ENCODE measurements at regions of chr11 and their contacts with region 1.

Region 1: DNA sequence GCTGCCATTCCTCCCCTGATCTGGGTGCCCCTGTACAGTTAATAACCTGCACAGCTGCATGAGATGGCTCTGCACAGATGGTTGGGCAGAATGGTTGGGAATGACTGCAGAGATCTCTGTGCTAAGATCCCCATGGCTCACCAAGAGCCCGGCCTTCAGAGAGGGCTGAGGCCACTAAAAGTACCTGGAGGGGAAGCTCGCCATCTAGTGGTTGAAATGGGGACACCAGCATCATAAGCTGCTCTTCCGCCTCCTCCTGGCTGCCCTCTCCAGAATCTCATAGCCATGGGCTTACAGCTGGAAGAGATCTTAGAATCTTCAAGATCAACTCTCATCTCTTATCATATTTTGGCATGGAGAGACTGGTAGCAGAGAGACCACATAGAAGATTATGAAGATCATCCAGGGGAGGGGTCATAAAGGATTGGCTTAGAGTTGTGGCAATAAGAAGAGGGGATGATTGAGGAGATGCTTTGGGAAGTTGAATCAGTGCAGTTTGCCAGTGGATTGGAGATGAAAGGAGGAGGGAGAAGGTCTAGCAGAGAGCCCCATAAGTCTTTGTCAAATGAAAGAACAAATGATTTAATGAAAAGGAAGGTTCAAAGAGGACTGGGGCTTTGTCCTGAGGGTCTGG is 22.0 kb upstream of the TLCD5 start:
- DNase-seq: peak; percentile 56 to 76
- ATAC-seq: peak; percentile 79 to 89
- H3K4me3 ChIP-seq: no peak overlapping the region
- H3K27ac ChIP-seq: no peak overlapping the region
- H3K4me1 ChIP-seq: peaks cover 22% of the 10 kb centered on the region
- CTCF ChIP-seq: peak; percentile 70
- EP300 ChIP-seq: no peak
- POLR2A ChIP-seq: no peak
- RAD21 ChIP-seq: peak; percentile 55 to 64; a peak in 4 of 5 replicates

Region 2: DNA sequence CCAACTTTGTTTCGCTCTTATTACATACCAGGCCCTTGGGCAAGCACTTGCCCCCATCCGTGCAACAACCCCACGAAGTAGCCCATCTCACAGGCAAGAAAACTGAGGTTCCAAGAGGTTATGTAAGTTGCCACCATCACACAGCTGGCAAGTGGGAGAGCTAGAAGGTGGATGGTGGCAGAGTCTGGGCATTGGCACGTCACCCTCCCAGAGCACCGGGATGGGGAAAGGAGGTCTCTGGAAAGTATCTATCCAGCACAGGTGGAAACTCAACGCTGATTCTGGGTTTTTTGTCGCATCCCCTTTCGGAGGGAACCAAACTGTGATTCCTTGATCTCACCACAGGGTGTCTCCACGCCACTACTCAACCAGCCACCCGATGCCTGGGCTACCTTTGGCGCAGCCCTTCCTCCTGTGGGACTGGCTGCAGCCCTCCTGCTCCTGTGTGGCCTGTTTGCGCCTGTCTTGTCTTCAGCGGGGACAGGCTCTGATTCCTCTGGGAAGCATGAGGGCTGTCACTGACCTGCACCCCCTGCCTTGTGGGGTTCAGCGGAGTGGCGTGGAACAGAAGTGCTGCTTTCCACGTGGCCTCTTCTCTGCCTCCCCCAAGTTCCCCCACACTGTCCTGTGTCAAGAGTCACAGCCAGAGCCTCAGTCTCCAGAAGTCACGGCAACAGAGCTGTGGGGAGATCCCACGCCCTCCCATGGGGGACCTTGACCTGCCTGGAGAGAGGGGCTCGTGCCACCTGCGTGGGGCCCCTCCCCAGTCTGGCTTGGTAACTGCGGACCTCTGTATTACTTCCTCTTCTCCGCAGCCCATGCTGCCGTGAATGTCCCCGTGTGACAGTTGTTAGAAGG is 130.8 kb before region 1 on chr11:
- CTCF ChIA-PET with region 1: interaction called, 109 read pairs
- POLR2A ChIA-PET with region 1: no interaction called
- DNase-seq: peak; percentile 50 to 64
- ATAC-seq: peak; percentile 55 to 73
- H3K4me3 ChIP-seq: no peak overlapping the region
- H3K27ac ChIP-seq: no peak overlapping the region
- H3K4me1 ChIP-seq: 0 out of 3 replicates have a peak, but pooled peaks cover 3% of the 10 kb centered on the region
- CTCF ChIP-seq: peak; percentile 56
- EP300 ChIP-seq: no peak
- POLR2A ChIP-seq: no peak
- RAD21 ChIP-seq: peak; percentile 79 to 87

Region 3: DNA sequence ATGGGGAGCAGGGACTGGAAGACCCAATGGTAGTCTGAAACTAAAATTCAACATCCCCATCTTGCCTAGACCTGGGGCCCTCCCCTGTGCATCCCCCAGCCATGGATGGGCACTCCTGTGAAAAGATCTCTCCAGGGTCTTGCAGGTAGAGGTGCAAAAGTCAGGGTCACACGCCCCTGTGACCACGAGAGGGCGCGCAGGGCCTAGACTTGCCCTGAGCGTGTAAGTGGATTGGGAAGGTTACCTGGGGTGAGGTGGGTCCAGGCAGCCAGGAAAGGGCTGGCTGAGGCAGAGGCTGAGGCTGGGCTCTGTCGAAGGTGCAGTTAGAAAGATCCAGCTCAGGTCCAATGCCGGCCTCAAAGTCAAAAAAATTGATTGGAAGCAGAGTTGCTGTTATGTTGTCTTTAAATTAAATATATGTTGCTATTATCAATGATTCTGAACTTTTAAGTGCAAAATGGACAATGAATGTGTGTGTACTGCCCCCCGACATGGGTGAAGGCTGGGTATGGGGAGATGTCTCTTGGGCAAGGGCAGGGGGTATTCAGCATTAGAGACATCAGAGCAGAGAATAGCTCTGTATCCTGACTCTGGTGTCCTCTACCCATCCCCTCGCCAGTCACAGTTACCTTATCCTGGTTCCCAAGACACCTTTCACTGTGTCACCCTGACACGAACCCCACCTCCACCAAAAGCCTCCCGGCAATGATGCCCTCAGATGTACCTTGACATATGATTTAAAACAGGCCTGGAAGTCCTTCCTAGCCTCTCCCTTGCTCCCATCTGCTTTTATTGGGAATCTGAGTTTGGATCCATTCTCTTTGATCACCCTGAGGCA is 67.9 kb before region 1 on chr11:
- CTCF ChIA-PET with region 1: interaction called, 407 read pairs
- POLR2A ChIA-PET with region 1: interaction called, 4 read pairs
- DNase-seq: peak; percentile 64 to 68
- ATAC-seq: peak; percentile 82 to 91; a peak in 5 of 6 replicates
- H3K4me3 ChIP-seq: no peak overlapping the region
- H3K27ac ChIP-seq: no peak overlapping the region
- H3K4me1 ChIP-seq: no peaks in the 10 kb centered on the region
- CTCF ChIP-seq: peak; percentile 66
- EP300 ChIP-seq: no peak
- POLR2A ChIP-seq: no peak
- RAD21 ChIP-seq: peak; percentile 73 to 79

Region 4: DNA sequence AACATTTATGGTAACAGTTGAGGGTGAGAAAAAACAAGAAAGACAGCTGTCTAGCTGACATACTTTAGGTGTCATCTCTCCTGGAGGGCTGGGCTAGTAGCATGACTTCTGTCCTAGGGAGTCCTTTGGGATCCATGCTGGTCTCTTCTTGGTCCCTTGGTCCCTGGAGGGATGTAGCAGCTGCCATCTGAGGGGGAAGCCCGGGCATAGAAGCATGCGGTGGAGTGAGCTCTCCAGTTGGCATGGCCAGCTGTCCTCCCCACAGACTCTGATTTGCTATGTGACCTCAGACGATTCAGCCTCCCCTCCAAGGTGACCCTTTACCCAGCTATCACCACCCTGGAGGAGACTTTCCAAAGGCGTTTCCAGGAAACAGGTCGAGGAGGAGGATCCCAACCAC is 34.4 kb before region 1 on chr11:
- CTCF ChIA-PET with region 1: interaction called, 11 read pairs
- POLR2A ChIA-PET with region 1: no interaction called
- DNase-seq: no peak
- ATAC-seq: no peak
- H3K4me3 ChIP-seq: no peak overlapping the region
- H3K27ac ChIP-seq: no peak overlapping the region
- H3K4me1 ChIP-seq: no peaks in the 10 kb centered on the region
- CTCF ChIP-seq: no peak
- EP300 ChIP-seq: no peak
- POLR2A ChIP-seq: no peak
- RAD21 ChIP-seq: no peak

Region 5: DNA sequence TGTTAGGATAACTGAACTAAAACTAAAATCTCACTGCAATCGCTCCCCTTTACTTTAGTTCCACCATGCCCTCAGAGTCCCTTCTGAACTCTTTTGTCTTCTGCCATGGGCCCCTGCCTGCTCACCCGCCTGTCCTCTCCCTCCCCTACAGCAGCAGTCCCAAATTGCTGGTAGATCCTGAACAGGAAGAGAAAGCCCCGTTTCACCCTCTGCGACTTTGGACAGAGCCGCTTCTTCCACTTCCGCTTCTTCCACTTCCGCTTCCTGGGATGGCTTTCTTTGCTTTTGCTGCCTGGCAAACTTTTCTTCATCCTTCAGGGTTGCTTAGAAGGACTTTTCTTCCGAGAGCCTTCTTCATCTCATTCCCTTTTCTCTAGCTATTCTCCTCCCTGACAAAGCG is 13.7 kb before region 1 on chr11:
- CTCF ChIA-PET with region 1: interaction called, 38 read pairs
- POLR2A ChIA-PET with region 1: no interaction called
- DNase-seq: no peak
- ATAC-seq: no peak
- H3K4me3 ChIP-seq: no peak overlapping the region
- H3K27ac ChIP-seq: no peak overlapping the region
- H3K4me1 ChIP-seq: no peaks in the 10 kb centered on the region
- CTCF ChIP-seq: no peak
- EP300 ChIP-seq: no peak
- POLR2A ChIP-seq: no peak
- RAD21 ChIP-seq: no peak